AG04450 (cell line): ENCODE measurements at regions of chr6 and their contacts with region 1.

Region 1: DNA sequence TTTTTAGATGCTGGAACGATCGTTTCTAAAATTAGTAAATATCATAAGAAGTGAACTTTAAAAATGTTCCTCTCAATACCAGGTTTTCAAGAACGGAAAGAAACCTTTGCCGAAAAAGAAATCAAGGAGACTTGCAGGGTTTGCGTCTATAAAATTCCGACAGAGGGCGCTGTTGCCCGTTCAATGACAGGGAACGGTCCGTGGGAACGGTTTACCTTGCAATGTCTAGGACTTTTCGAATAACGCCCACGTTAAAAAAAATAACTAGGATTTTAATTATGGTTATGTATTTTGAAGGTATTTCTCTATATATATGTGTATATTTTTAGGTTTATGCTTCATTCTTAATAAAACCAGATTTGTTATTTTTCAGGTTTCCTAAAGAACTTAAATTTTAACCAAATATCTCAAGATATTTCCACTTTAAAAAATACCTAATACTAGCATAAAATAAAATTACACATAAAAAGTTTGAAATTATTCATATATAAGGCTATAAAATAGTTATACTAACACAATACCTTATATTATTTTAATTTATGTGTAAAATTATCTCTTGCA is 2.5 kb upstream of the TFAP2B start:
- DNase-seq: peak; percentile 13
- H3K4me3 ChIP-seq: peak overlapping the region; percentile 59
- H3K27ac ChIP-seq: no peak overlapping the region
- H3K27me3 ChIP-seq: peaks cover 23% of the 10 kb centered on the region
- CTCF ChIP-seq: peak; percentile 81

Region 2: DNA sequence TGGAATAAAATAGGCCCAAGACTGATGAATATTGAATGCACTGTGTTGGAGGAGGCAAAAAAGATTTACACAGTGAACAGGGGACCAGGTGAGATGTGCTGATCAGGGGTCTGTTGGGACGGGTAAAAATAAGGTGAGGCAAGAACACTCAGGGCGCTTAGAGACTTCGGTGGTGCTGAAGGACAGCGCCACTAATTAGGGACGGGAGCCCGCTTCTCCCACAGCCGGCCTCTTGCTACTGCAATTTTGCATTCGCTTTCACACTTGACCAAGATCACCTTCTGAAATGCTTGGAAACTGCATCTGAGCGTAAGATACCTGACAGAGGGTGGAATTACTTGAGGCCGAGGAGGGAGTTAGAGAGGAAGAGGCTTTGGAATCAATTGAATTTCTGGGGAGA is 95.6 kb before region 1 on chr6:
- CTCF ChIA-PET with region 1: no interaction called
- POLR2A ChIA-PET with region 1: no interaction called
- DNase-seq: no peak
- H3K4me3 ChIP-seq: no peak overlapping the region
- H3K27ac ChIP-seq: no peak overlapping the region
- H3K27me3 ChIP-seq: peaks cover 2% of the 10 kb centered on the region
- CTCF ChIP-seq: no peak

Region 3: GRCh38 chr6:50829898-50830439 is 13.8 kb after region 1 on chr6:
- CTCF ChIA-PET with region 1: interaction called, 11 read pairs
- POLR2A ChIA-PET with region 1: no interaction called
- DNase-seq: no peak
- H3K4me3 ChIP-seq: no peak overlapping the region
- H3K27ac ChIP-seq: no peak overlapping the region
- H3K27me3 ChIP-seq: peaks cover 14% of the 10 kb centered on the region
- CTCF ChIP-seq: no peak